Activated CD4-positive, alpha-beta T cell treated with anti-CD3 and anti-CD28 coated beads, Interleukin-2, amount 10 ng/mL, durations not matched to agents 24 days and 14 days (primary cell): ENCODE measurements at regions of chr12 and their contacts with region 1.

Region 1: DNA sequence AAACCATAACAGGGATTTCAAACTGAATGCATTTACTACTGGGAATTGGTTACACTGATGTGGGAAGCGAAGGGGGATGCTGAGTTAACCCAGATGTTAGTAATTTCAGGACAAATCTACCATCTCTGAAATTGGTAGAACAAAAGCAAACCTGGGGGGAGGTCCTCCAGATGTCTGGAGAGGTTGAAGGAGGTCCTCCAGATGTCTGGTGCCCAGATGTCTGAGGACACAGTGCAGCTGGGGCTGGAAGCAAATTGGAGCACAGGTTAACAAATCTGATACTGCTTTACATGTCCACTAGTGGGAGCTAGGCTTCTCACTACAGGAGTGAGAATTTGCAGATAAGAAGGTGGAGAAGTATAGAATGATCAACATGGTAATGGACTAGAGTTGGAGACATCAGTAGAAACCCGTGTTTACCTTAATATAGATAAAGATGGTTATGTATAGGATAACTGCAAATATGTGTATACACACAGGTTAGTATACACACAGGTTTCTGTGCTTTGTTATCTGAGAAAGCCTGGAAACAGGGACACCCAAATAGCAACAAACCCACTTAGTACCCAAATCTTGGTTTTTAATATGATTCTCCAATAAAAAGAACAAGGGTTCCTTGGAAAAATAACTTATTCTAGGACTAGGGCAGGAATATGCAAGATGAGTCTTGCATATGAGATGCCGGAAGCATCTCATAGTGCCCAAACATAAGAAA is 162.5 kb downstream of the C12orf50 start:
- DNase-seq: no peak
- H3K4me3 Mint-ChIP-seq: no peak overlapping the region
- H3K27ac Mint-ChIP-seq: no peak overlapping the region
- H3K4me1 Mint-ChIP-seq: no peaks in the 10 kb centered on the region
- H3K27me3 Mint-ChIP-seq: no peaks in the 10 kb centered on the region

Region 2: DNA sequence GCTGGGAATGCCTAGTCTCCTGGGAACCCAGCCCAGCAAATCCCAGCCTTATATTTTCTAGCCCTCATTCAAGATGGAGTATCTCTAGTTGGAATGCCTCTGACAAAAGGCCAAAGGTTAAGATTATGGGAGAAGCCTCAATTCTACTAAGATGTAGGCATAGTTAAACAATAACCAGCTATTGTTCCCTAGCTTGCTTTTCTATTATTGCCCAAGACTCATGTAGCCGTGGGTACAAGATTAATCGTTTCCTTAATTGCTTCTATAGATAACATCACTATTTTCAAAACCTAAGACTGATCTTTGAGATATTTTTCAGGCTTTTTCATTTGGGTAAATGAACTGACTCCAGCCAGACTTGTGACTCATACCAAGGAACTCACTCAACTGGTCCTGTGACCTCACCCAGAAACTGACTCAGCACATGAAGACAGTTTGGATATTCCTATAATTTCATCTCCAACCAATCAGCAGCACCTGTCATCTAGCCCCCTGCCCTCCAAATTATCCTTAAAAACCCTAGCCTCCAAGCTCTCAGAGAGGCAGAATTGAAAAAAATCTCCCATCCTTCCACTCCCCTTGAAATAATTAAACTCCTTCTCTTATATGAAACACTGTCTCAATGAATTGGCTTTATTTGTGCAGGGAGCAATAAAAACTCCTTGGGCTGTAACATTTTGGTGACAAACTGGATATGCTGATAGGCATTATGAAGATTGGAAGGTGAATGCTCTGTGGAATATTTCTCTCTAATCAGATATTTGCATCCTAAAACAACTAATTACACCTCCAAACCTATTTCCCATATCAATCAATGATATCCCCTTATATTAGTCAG is 426.5 kb before region 1 on chr12:
- intact Hi-C with region 1: no loop called
- DNase-seq: no peak
- H3K4me3 Mint-ChIP-seq: no peak overlapping the region
- H3K27ac Mint-ChIP-seq: no peak overlapping the region
- H3K4me1 Mint-ChIP-seq: no peaks in the 10 kb centered on the region
- H3K27me3 Mint-ChIP-seq: no peaks in the 10 kb centered on the region

Region 3: GRCh38 chr12:87642245-87642644 is 224.5 kb before region 1 on chr12:
- intact Hi-C with region 1: no loop called
- DNase-seq: no peak
- H3K4me3 Mint-ChIP-seq: no peak overlapping the region
- H3K27ac Mint-ChIP-seq: no peak overlapping the region
- H3K4me1 Mint-ChIP-seq: no peaks in the 10 kb centered on the region
- H3K27me3 Mint-ChIP-seq: no peaks in the 10 kb centered on the region

Region 4: GRCh38 chr12:87687362-87687761 is 179.4 kb before region 1 on chr12:
- intact Hi-C with region 1: no loop called
- DNase-seq: no peak
- H3K4me3 Mint-ChIP-seq: no peak overlapping the region
- H3K27ac Mint-ChIP-seq: no peak overlapping the region
- H3K4me1 Mint-ChIP-seq: no peaks in the 10 kb centered on the region
- H3K27me3 Mint-ChIP-seq: no peaks in the 10 kb centered on the region

Region 5: GRCh38 chr12:87768501-87769287 is 98.0 kb before region 1 on chr12:
- intact Hi-C with region 1: no loop called
- DNase-seq: no peak
- H3K4me3 Mint-ChIP-seq: no peak overlapping the region
- H3K27ac Mint-ChIP-seq: no peak overlapping the region
- H3K4me1 Mint-ChIP-seq: no peaks in the 10 kb centered on the region
- H3K27me3 Mint-ChIP-seq: no peaks in the 10 kb centered on the region

Region 6: DNA sequence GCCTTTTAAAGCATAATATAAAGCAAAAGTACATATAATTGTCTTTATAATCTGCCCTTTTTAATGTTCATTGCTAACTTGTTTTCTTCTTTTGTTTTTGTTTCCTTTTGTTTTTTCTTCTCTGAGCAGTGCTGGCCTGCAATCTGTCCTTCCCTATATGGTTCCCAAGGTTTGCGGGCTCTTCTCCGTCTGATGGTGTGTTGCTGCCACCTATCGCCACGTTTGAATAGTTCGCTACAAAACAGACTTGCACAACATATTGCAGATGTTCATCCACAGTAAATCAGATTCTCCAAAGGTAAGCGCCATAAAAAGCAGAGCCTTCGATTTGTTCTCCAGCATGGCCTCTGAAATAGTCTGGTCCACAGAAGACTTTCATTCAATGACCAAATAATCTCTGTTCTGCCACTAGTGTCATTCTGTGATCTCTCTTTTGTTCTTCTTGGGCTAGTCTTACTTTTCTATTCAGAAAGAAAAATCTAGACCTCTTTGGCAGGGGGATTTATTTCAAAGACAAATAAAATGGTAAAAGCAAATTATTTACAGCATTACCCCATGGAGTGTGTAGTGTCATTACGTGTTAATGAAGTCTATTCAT is 128.9 kb after region 1 on chr12:
- intact Hi-C with region 1: loop called (anchors 5 kb)
- DNase-seq: peak; percentile 76
- H3K4me3 Mint-ChIP-seq: no peak overlapping the region
- H3K27ac Mint-ChIP-seq: no peak overlapping the region
- H3K4me1 Mint-ChIP-seq: peaks cover 1% of the 10 kb centered on the region
- H3K27me3 Mint-ChIP-seq: peaks cover 1% of the 10 kb centered on the region